ENCODE measurements at regions of chr17 and their contacts with region 1.

Region 1: GRCh38 chr17:47305302-47305923 is 18.3 kb upstream of the EFCAB13 start:
- DNase-seq: no peak
- ATAC-seq: no peak
- H3K4me3 ChIP-seq: no peak overlapping the region
- H3K4me3 Mint-ChIP-seq: no peak overlapping the region
- H3K27ac ChIP-seq: no peak overlapping the region
- H3K27ac Mint-ChIP-seq: no peak overlapping the region
- H3K4me1 ChIP-seq: peaks cover 6% of the 10 kb centered on the region in 2 donors
- H3K4me1 Mint-ChIP-seq: peaks cover 12% of the 10 kb centered on the region
- H3K27me3 ChIP-seq: no peaks in the 10 kb centered on the region
- H3K27me3 Mint-ChIP-seq: no peaks in the 10 kb centered on the region
- CTCF ChIP-seq: no peak

Region 2: GRCh38 chr17:47291238-47291873 is 14.1 kb before region 1 on chr17:
- CTCF ChIA-PET with region 1: interaction called, 12 read pairs
- POLR2A ChIA-PET with region 1: interaction called, 3 read pairs
- intact Hi-C with region 1: no loop called
- DNase-seq: no peak
- ATAC-seq: no peak
- H3K4me3 ChIP-seq: no peak overlapping the region
- H3K4me3 Mint-ChIP-seq: no peak overlapping the region
- H3K27ac ChIP-seq: no peak overlapping the region
- H3K27ac Mint-ChIP-seq: peak overlapping the region; percentile 53
- H3K4me1 ChIP-seq: peaks cover 45% of the 10 kb centered on the region in 2 donors
- H3K4me1 Mint-ChIP-seq: peaks cover 51% of the 10 kb centered on the region
- H3K27me3 ChIP-seq: no peaks in the 10 kb centered on the region
- H3K27me3 Mint-ChIP-seq: no peaks in the 10 kb centered on the region
- CTCF ChIP-seq: no peak

Measured in B cell (primary cell).